ENCODE measurements at regions of chr16 and their contacts with region 1.

Region 1: DNA sequence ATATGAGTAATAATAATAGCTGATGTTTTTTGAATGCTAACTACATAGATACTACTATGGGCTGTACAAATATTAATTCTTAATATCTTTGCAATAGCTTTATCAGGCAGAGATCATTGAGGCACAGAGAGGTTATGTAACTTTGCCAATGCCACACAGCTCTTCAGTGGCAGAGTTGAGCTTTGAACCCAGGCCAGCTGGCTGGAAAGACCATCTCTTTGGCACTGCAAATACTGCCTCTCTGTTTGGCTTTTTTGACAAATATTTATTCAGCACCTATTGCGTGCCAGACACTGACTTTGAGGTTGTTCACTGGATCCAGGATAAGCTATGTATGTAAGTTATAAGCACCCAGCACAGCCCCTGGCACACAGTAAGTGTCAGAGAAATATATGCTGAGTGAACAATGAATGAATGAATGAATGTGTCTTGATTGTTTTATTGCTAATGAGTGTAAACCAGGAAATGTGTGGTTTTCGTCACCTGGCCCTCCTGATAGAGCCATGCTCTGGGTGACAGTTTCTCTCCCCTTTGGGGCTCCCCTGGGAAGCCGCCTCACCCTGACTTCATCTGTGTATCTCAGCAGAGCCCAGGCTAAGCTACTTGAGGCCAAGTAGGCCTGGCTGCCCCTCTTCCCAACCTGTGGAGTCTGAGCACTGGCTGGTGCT is 2.5 kb downstream of the AQP8 start:
- DNase-seq: no peak
- H3K4me3 ChIP-seq: no peak overlapping the region
- H3K27ac ChIP-seq: no peak overlapping the region
- H3K4me1 ChIP-seq: no peaks in the 10 kb centered on the region
- H3K27me3 ChIP-seq: no peaks in the 10 kb centered on the region
- CTCF ChIP-seq: no peak
- POLR2A ChIP-seq: no peak

Region 2: DNA sequence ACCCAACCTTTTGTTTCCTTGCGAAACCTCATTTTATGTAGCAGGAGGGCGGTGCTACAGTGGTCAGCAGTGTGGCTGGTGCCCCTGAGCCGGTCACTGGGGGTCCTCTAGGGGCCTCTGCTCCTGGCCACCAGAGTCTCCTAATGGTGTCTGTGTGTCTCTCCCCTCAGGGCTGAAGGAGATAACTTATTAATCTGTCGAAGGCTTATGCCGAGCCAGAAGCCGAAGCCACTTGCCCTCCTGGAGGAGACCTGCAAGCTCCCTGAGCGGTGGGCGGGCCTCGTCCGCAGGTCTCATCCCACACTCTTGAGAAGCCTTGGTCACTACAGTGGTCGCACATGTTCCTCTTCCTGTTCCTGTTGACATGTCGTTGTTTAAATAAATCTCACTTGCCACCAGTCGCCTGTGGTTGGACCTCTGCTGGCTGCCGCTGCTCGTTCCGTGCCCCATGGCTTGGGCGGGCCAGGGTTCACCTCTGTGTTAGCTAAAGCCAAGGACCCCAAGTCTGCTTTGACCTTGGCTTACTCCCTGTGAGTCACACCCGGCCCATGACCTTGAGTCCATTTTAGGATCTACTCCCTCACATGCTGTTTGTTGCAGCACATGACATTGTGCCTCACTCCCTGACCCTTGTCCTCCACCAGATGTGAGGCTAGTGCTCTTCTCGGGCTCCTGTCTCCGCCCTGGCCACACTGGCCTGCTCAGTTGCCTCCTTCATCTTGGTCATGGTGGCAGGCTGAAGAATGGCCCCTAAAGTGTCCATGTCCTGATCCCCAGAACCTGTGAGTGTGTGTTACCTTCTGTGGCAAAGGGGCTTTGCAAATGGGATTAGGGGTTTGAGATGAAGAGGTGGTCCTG is 41.1 kb before region 1 on chr16:
- CTCF ChIA-PET with region 1: no interaction called
- POLR2A ChIA-PET with region 1: no interaction called
- dilution Hi-C with region 1: no loop called
- intact Hi-C with region 1: no loop called
- DNase-seq: no peak
- H3K4me3 ChIP-seq: no peak overlapping the region
- H3K27ac ChIP-seq: no peak overlapping the region
- H3K4me1 ChIP-seq: no peaks in the 10 kb centered on the region
- H3K27me3 ChIP-seq: no peaks in the 10 kb centered on the region
- CTCF ChIP-seq: no peak
- POLR2A ChIP-seq: no peak

Region 3: DNA sequence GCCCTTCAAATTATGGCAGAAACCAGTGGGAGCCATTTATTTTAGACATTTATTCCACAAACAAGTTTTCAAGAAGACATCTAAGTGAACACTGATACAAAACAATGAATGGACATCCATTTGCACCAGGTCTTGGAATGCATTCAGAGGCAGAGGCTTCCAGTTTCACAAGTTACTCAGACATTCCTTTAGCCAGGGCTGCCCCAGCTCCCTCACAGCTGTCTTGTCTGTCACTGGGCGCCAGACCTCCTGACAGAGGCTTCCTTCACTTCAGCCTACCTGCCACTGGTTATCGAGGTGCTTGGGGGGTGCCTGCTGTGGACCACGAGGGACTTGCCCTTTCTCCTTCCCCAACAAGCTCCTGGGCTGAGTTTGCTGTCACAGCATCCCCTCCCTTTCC is 16.8 kb after region 1 on chr16:
- CTCF ChIA-PET with region 1: interaction called, 31 read pairs
- POLR2A ChIA-PET with region 1: no interaction called
- dilution Hi-C with region 1: no loop called
- intact Hi-C with region 1: no loop called
- DNase-seq: no peak
- H3K4me3 ChIP-seq: no peak overlapping the region
- H3K27ac ChIP-seq: no peak overlapping the region
- H3K4me1 ChIP-seq: no peaks in the 10 kb centered on the region
- H3K27me3 ChIP-seq: no peaks in the 10 kb centered on the region
- CTCF ChIP-seq: no peak
- POLR2A ChIP-seq: no peak

Region 4: GRCh38 chr16:26281381-26282110 is 1062.3 kb after region 1 on chr16:
- CTCF ChIA-PET with region 1: no interaction called
- POLR2A ChIA-PET with region 1: no interaction called
- dilution Hi-C with region 1: no loop called
- intact Hi-C with region 1: no loop called
- DNase-seq: no peak
- H3K4me3 ChIP-seq: no peak overlapping the region
- H3K27ac ChIP-seq: no peak overlapping the region
- H3K4me1 ChIP-seq: no peaks in the 10 kb centered on the region
- H3K27me3 ChIP-seq: no peaks in the 10 kb centered on the region
- CTCF ChIP-seq: no peak
- POLR2A ChIP-seq: no peak